Activated CD4-positive, alpha-beta T cell treated with anti-CD3 and anti-CD28 coated beads for 36 hours (primary cell): ENCODE measurements at regions of chr10 and their contacts with region 1.

Region 1: GRCh38 chr10:110007701-110008517 is at the start of gene ADD3:
- DNase-seq: peak; percentile 94
- ATAC-seq: peak; percentile 65
- H3K4me3 Mint-ChIP-seq: no peak within 1 kb of the TSS
- H3K27ac Mint-ChIP-seq: peak within 1 kb of the TSS; percentile 94
- H3K4me1 Mint-ChIP-seq: peaks cover 49% of the 10 kb centered on the region
- H3K27me3 Mint-ChIP-seq: no peaks in the 10 kb centered on the region
- total RNA-seq, gene ADD3: 72.5 to 101 TPM

Region 2: DNA sequence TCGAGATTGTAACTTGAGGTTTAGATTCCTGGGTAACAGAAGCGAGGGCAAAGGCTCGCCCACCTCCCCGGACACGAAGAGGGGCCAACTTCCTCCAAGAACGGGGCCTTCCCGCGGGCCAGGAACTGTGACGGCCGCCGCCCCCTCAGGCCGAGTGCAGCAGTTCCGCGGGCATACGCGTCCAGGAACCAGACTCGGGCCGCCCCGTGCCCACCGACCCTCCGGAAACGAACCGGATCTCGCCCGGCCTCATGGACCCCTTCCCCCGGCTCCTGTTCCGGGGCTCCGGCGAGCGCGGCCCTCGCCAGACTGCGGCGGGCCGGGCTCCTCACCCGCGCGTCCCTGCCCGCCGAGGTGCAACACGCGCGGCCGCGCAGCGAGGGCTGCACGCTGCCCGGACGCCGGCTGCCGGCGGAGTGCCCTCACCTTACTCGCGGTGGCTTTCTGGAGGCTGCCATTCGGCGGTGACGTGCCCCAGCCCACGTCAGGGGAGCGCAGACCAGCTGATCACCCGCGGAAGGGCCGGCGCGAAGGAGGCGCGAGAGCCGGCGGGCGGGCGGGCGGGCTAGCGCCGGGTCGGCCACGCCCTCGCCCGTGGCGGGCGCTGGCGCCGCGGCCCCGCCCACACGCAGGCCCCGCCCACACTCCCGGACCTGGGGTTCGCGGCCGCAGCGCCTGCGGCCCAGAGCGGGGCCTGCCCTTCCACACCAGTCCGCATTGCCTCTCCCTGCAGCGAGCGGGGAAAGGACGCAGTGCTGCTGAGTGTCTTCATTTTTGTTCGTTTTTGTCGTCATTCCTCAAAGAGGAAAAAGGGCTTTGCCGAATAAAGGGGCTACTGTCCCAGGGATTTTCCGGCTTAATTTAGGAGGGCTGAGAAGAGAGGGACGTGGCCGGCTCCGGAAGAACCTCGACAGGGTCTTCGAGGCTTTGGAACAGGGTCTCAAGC is 84.7 kb before region 1 on chr10 and contains the start of gene XPNPEP1:
- CTCF ChIA-PET with region 1: interaction called, 3 read pairs
- POLR2A ChIA-PET with region 1: no interaction called
- intact Hi-C with region 1: loop called (anchors 1 to 2 kb)
- DNase-seq: peak; percentile 90
- ATAC-seq: peak; percentile 90
- H3K4me3 Mint-ChIP-seq: peak within 1 kb of the TSS; percentile 94
- H3K27ac Mint-ChIP-seq: peak within 1 kb of the TSS; percentile 94
- H3K4me1 Mint-ChIP-seq: peaks cover 48% of the 10 kb centered on the region
- H3K27me3 Mint-ChIP-seq: no peaks in the 10 kb centered on the region
- total RNA-seq, gene XPNPEP1: 85.4 to 91.2 TPM

Region 3: GRCh38 chr10:109956454-109957091 is 51.3 kb before region 1 on chr10:
- CTCF ChIA-PET with region 1: no interaction called
- POLR2A ChIA-PET with region 1: no interaction called
- intact Hi-C with region 1: no loop called
- DNase-seq: peak; percentile 54
- ATAC-seq: peak; percentile 96
- H3K4me3 Mint-ChIP-seq: no peak overlapping the region
- H3K27ac Mint-ChIP-seq: no peak overlapping the region
- H3K4me1 Mint-ChIP-seq: peaks cover 2% of the 10 kb centered on the region
- H3K27me3 Mint-ChIP-seq: no peaks in the 10 kb centered on the region

Region 4: DNA sequence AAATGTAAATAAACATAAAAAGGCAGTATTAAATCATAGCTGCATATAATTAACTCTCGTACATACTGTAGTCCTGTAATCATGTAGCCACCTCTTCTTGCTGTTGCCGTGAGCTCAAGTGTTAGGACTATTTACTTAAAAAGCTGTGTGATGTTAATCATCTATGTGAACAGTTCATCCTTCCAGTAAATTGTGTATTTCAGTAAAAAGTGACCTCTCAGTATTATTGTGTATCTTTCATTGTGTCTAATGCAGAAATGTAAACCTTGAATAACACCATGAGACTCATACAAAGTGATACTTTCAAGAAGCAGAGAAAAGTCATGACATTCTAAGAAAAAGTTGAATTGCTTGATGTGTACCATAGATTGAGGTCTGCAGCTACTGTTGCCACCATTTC is 37.9 kb after region 1 on chr10:
- CTCF ChIA-PET with region 1: interaction called, 4 read pairs
- POLR2A ChIA-PET with region 1: no interaction called
- intact Hi-C with region 1: loop called in 1 of 2 experiments (anchors 5 kb)
- DNase-seq: no peak
- ATAC-seq: peak; percentile 74
- H3K4me3 Mint-ChIP-seq: no peak overlapping the region
- H3K27ac Mint-ChIP-seq: peak overlapping the region; percentile 7
- H3K4me1 Mint-ChIP-seq: peaks cover 56% of the 10 kb centered on the region
- H3K27me3 Mint-ChIP-seq: no peaks in the 10 kb centered on the region

Region 5: GRCh38 chr10:110101464-110102144 is 93.7 kb after region 1 on chr10:
- CTCF ChIA-PET with region 1: no interaction called
- POLR2A ChIA-PET with region 1: no interaction called
- intact Hi-C with region 1: loop called (anchors 1 kb)
- DNase-seq: peak; percentile 32
- ATAC-seq: peak; percentile 78
- H3K4me3 Mint-ChIP-seq: peak overlapping the region; percentile 2
- H3K27ac Mint-ChIP-seq: peak overlapping the region; percentile 84
- H3K4me1 Mint-ChIP-seq: peaks cover 71% of the 10 kb centered on the region
- H3K27me3 Mint-ChIP-seq: no peaks in the 10 kb centered on the region

Region 6: GRCh38 chr10:110304780-110305421 is 297.0 kb after region 1 on chr10 and contains the start of gene SMNDC1:
- CTCF ChIA-PET with region 1: no interaction called
- POLR2A ChIA-PET with region 1: no interaction called
- intact Hi-C with region 1: loop called in 1 of 2 experiments (anchors 1 kb)
- DNase-seq: peak; percentile 98
- ATAC-seq: peak; percentile 93
- H3K4me3 Mint-ChIP-seq: peak within 1 kb of the TSS; percentile 95
- H3K27ac Mint-ChIP-seq: peak within 1 kb of the TSS; percentile 98
- H3K4me1 Mint-ChIP-seq: peaks cover 42% of the 10 kb centered on the region
- H3K27me3 Mint-ChIP-seq: no peaks in the 10 kb centered on the region
- total RNA-seq, gene SMNDC1: 44.2 to 56.7 TPM